ENCODE measurements at regions of chr9 and their contacts with region 1.

Region 1: GRCh38 chr9:124868511-124869465 is 6.9 kb downstream of the ARPC5L start:
- DNase-seq: peak; percentile 92
- H3K4me3 Mint-ChIP-seq: peak overlapping the region; percentile 81
- H3K27ac Mint-ChIP-seq: peak overlapping the region; percentile 100
- H3K4me1 Mint-ChIP-seq: peaks cover 45% of the 10 kb centered on the region
- H3K27me3 Mint-ChIP-seq: peaks cover 1% of the 10 kb centered on the region

Region 2: DNA sequence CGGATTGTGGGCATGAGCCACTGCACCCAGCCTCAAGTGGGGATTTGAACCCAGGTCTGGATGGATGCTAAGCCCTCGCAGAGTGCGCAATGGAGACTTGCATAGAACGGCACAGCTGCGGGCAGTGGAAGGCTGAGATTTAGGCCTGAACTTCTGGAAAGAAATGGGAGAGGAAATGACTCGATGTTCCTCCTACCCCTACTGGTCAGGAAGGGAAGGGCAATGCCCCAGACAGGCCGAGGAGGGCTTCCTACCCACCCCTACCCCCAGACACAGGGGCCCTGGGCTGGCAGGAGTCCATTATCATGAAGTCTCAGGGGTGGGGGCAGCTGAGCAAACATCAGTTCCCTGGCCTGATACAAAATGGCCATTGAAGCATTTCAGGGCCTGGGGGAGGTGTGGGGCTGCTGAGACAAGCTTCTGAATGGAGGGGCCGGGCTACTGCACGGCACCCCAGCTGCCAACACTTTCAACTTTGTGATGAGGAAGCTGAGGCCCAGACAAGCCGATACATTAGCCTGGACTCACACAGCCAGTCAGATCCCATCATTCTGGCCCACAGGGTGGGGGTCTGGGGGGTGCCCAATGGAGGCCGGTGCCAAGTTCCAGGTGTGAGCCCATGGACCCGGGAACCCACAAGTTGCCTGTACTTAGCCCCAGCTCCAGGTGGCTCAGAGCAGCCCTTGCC is 29.0 kb before region 1 on chr9:
- CTCF ChIA-PET with region 1: no interaction called
- POLR2A ChIA-PET with region 1: no interaction called
- intact Hi-C with region 1: no loop called
- DNase-seq: no peak
- H3K4me3 Mint-ChIP-seq: no peak overlapping the region
- H3K27ac Mint-ChIP-seq: no peak overlapping the region
- H3K4me1 Mint-ChIP-seq: no peaks in the 10 kb centered on the region
- H3K27me3 Mint-ChIP-seq: peaks cover 17% of the 10 kb centered on the region

Region 3: GRCh38 chr9:124852829-124853531 is 15.8 kb before region 1 on chr9 and contains the start of gene WDR38:
- CTCF ChIA-PET with region 1: interaction called, 17 read pairs
- POLR2A ChIA-PET with region 1: interaction called, 55 read pairs
- intact Hi-C with region 1: no loop called
- DNase-seq: peak; percentile 84
- H3K4me3 Mint-ChIP-seq: peak within 1 kb of the TSS; percentile 70
- H3K27ac Mint-ChIP-seq: no peak within 1 kb of the TSS
- H3K4me1 Mint-ChIP-seq: peaks cover 16% of the 10 kb centered on the region
- H3K27me3 Mint-ChIP-seq: peaks cover 4% of the 10 kb centered on the region
- total RNA-seq, gene WDR38: not detected

Region 4: GRCh38 chr9:124880501-124880900 is 11.7 kb after region 1 on chr9:
- CTCF ChIA-PET with region 1: no interaction called
- POLR2A ChIA-PET with region 1: interaction called, 12 read pairs
- intact Hi-C with region 1: no loop called
- DNase-seq: no peak
- H3K4me3 Mint-ChIP-seq: no peak overlapping the region
- H3K27ac Mint-ChIP-seq: no peak overlapping the region
- H3K4me1 Mint-ChIP-seq: peaks cover 4% of the 10 kb centered on the region
- H3K27me3 Mint-ChIP-seq: no peaks in the 10 kb centered on the region

Region 5: GRCh38 chr9:124940693-124941453 is 72.1 kb after region 1 on chr9 and contains the start of gene GOLGA1:
- CTCF ChIA-PET with region 1: no interaction called
- POLR2A ChIA-PET with region 1: interaction called, 9 read pairs
- intact Hi-C with region 1: loop called (anchors 1 kb)
- DNase-seq: peak; percentile 95
- H3K4me3 Mint-ChIP-seq: peak within 1 kb of the TSS; percentile 79
- H3K27ac Mint-ChIP-seq: peak within 1 kb of the TSS; percentile 89
- H3K4me1 Mint-ChIP-seq: peaks cover 24% of the 10 kb centered on the region
- H3K27me3 Mint-ChIP-seq: no peaks in the 10 kb centered on the region
- total RNA-seq, gene GOLGA1: 14.1 to 15.3 TPM

Region 6: GRCh38 chr9:125074976-125075375 is 206.2 kb after region 1 on chr9:
- CTCF ChIA-PET with region 1: no interaction called
- POLR2A ChIA-PET with region 1: no interaction called
- intact Hi-C with region 1: no loop called
- DNase-seq: no peak
- H3K4me3 Mint-ChIP-seq: no peak overlapping the region
- H3K27ac Mint-ChIP-seq: no peak overlapping the region
- H3K4me1 Mint-ChIP-seq: no peaks in the 10 kb centered on the region
- H3K27me3 Mint-ChIP-seq: no peaks in the 10 kb centered on the region

Region 7: DNA sequence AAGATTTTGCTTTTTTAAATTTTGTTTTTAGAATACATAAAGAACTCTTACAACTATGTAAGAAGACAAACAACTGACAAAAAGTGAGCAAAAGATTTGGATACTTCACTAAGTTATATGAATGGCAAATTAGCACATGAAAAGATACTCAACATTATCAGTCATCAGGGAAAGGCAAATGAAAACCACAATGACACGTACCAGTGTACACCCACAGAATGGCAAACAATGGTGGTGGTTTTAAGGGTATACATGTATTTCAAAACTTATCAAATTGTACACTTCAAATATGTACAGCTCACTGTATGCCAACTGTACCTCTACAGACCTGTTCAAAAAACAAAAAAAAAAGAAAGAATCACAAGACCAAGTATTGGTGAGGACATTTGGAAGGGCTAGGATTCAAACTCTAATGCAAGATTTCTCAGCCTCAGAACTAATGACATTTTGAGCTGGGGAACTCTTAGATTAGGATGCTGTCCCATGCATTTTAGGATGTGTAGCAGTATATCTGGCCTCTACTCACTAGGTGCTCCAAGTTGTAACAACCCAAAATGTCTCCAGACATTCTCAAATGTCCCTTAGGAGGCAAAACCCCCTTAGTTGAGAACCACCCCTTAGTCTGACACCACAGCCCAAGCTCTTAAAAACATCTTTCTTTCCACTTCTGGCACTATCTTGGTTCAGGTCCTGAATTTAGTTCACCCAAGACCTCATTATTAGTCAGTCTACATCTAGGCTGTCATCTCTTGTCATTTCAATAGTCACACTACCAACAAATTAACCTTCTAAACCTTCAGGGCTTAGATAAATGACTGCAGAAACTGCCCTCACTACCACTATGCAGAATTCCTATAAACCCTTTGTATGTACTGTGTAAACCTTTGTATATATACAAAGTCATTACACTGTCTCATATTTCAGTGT is 264.9 kb after region 1 on chr9:
- CTCF ChIA-PET with region 1: no interaction called
- POLR2A ChIA-PET with region 1: no interaction called
- intact Hi-C with region 1: loop called (anchors 1 kb)
- DNase-seq: peak; percentile 26
- H3K4me3 Mint-ChIP-seq: no peak overlapping the region
- H3K27ac Mint-ChIP-seq: peak overlapping the region; percentile 84
- H3K4me1 Mint-ChIP-seq: peaks cover 18% of the 10 kb centered on the region
- H3K27me3 Mint-ChIP-seq: no peaks in the 10 kb centered on the region

Region 8: DNA sequence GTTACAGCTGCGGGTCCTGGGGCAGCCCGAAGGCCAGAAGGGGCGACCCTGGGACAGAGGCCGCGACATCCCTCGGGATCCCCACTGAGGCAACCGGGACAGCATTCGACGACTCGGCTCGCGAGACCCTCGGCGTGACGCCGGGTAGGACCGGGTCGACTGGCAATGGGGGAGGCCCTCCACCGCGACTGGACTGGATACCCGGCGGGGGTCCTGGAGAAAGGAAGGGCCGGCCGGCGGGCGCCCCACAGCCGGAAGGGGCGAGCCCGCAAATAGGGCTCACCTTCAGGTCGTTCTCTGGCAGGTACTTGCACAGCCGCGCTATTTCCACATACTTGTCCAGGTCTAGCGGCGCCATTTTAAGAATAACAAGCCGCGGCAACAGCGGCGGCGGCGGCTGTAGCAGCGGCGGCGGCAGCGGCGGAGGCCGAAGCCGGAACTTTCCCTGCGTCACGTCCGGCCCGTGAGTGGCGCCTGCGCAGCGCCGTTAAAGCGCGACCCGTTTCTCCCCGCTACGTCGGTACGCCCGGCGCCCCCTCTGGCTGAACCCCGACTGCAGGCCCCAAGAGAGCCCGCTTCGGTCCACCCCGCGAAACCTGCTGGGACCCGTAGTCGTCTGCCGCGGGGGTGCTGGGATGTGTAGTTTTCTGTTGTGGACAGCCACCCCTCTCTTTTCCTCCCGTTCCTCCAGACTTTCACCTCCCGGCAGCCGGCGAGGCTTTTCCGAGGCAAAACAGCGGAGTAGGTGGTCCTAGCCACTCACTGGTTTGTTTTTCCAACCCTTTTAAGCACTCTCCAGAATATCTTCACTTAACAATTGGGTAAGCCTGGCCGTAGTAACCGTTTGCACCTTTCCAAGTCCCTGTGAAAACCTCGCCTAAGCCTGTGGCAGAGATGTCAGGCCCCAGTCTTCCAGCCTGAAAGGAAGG is 320.8 kb after region 1 on chr9 and contains the start of gene PPP6C:
- CTCF ChIA-PET with region 1: no interaction called
- POLR2A ChIA-PET with region 1: no interaction called
- intact Hi-C with region 1: loop called (anchors 5 kb)
- DNase-seq: peak; percentile 99
- H3K4me3 Mint-ChIP-seq: peak within 1 kb of the TSS; percentile 97
- H3K27ac Mint-ChIP-seq: peak within 1 kb of the TSS; percentile 95
- H3K4me1 Mint-ChIP-seq: peaks cover 54% of the 10 kb centered on the region
- H3K27me3 Mint-ChIP-seq: no peaks in the 10 kb centered on the region
- total RNA-seq, gene PPP6C: 46.7 to 47.4 TPM

Region 9: GRCh38 chr9:125200210-125201047 is 331.6 kb after region 1 on chr9 and contains the start of gene RABEPK:
- CTCF ChIA-PET with region 1: no interaction called
- POLR2A ChIA-PET with region 1: no interaction called
- intact Hi-C with region 1: loop called (anchors 5 kb)
- DNase-seq: peak; percentile 94
- H3K4me3 Mint-ChIP-seq: peak within 1 kb of the TSS; percentile 90
- H3K27ac Mint-ChIP-seq: peak within 1 kb of the TSS; percentile 84
- H3K4me1 Mint-ChIP-seq: peaks cover 34% of the 10 kb centered on the region
- H3K27me3 Mint-ChIP-seq: no peaks in the 10 kb centered on the region
- total RNA-seq, gene RABEPK: 20.7 to 21.9 TPM

Measured in activated CD4-positive, alpha-beta memory T cell treated with anti-CD3 and anti-CD28 coated beads for 36 hours (primary cell).